HepG2 (cell line): ENCODE measurements at regions of chr7 and their contacts with region 1.

Region 1: GRCh38 chr7:144032985-144033709 is 15.6 kb upstream of the OR2A5 start:
- DNase-seq: no peak
- ATAC-seq: no peak
- H3K4me3 ChIP-seq: no peak overlapping the region
- H3K27ac ChIP-seq: no peak overlapping the region
- H3K4me1 ChIP-seq: peaks cover 10% of the 10 kb centered on the region; the same call in 1 of the 2 replicates
- H3K27me3 ChIP-seq: no peaks in the 10 kb centered on the region
- CTCF ChIP-seq: no peak
- EP300 ChIP-seq: no peak
- POLR2A ChIP-seq: no peak
- RAD21 ChIP-seq: no peak

Region 2: GRCh38 chr7:143188994-143189393 is 844.2 kb before region 1 on chr7:
- CTCF ChIA-PET with region 1: no interaction called
- POLR2A ChIA-PET with region 1: no interaction called
- in situ Hi-C with region 1: no loop called
- intact Hi-C with region 1: loop called (anchors 5 kb)
- DNase-seq: no peak
- ATAC-seq: no peak
- H3K4me3 ChIP-seq: no peak overlapping the region
- H3K27ac ChIP-seq: no peak overlapping the region
- H3K4me1 ChIP-seq: no peaks in the 10 kb centered on the region
- H3K27me3 ChIP-seq: no peaks in the 10 kb centered on the region
- CTCF ChIP-seq: no peak
- EP300 ChIP-seq: no peak
- POLR2A ChIP-seq: no peak
- RAD21 ChIP-seq: no peak